Heart left ventricle (tissue), 16 donors: ENCODE measurements at regions of chr6 and their contacts with region 1.

Region 1: DNA sequence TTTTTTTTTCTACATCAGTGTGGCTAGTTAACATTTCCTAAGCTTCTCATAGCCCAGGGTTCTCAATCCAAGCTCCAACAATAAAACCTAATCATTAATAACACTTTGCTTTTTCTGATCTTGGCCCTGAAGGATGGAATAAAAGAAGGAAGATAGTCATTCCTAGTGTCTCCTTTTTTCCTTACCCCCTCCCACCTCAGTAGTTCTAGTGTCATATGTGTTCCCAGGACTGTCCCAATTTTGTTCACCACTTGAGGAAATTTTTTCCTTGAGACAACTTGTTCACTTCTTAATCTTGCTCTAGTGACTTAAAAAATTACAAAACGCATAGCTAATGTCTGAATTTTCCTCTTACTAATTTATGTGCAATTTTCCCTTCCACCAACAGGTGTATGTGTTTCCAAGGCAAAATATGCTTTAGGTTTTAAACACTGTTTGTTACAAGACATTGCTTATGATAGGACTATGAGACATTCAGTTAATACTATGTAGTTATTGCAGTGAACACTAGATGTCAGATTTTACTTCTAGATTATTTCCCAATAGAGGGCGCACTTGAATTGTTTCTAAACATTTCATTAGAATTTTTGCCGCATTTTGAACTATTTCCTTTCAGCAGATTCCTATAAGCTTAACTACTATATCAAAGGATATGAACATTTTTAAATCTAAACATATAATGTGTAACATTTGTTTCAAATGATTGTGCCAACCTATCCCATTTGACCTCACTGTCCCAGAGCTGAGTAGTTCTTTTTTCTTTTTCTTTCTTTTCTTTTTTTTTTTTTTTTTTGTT is 18.5 kb upstream of the C6orf141 start:
- DNase-seq: no peak
- ATAC-seq: peak in 2 of 4 donors; percentile 62 to 67
- H3K4me3 ChIP-seq: peak overlapping the region in 5 of 12 donors; percentile 13 to 29 (median 26)
- H3K27ac ChIP-seq: no peak overlapping the region
- H3K4me1 ChIP-seq: no peaks in the 10 kb centered on the region
- H3K27me3 ChIP-seq: peaks cover 0 to 3% (median 0%) of the 10 kb centered on the region in 9 donors
- CTCF ChIP-seq: peak; percentile 56 to 90 (median 76)
- POLR2A ChIP-seq: no peak

Region 2: DNA sequence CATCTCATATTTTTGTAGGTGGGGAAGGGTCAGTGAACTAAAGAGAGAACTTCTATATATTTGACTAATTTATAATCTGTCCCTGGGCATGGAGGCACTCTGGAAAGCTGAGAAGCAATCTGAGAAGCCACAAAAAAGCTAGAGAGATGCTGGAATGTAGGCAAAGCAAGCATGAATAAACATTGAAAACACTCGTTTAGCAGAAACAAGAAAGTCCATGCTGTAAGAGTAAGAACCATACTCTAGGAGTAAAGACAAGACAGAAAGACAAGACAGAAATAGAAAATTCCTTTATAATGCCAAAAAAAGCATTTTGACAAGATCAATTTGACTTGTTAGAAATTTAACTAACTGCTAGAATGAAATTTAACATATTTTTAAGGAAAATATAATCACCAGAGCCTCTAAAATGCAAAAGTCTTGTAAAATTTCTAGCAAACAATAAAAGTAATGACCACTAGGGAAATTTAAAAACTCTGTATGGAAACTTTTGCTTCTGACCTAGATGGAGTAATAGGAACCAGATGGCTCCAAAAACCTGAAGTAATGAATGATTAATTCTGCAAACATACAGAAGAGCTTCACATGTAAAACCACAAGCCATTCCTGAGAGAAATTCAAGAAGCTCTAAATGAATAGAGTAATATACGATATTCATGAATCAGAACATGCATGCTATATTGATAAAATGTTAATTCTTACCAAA is 795.3 kb before region 1 on chr6:
- intact Hi-C with region 1: no loop called
- DNase-seq: no peak
- ATAC-seq: no peak
- H3K4me3 ChIP-seq: no peak overlapping the region
- H3K27ac ChIP-seq: no peak overlapping the region
- H3K4me1 ChIP-seq: no peaks in the 10 kb centered on the region
- H3K27me3 ChIP-seq: no peaks in the 10 kb centered on the region
- CTCF ChIP-seq: no peak
- POLR2A ChIP-seq: no peak

Region 3: GRCh38 chr6:48835421-48835958 is 696.5 kb before region 1 on chr6:
- intact Hi-C with region 1: no loop called
- DNase-seq: no peak
- ATAC-seq: no peak
- H3K4me3 ChIP-seq: no peak overlapping the region
- H3K27ac ChIP-seq: no peak overlapping the region
- H3K4me1 ChIP-seq: no peaks in the 10 kb centered on the region
- H3K27me3 ChIP-seq: no peaks in the 10 kb centered on the region
- CTCF ChIP-seq: no peak
- POLR2A ChIP-seq: no peak

Region 4: DNA sequence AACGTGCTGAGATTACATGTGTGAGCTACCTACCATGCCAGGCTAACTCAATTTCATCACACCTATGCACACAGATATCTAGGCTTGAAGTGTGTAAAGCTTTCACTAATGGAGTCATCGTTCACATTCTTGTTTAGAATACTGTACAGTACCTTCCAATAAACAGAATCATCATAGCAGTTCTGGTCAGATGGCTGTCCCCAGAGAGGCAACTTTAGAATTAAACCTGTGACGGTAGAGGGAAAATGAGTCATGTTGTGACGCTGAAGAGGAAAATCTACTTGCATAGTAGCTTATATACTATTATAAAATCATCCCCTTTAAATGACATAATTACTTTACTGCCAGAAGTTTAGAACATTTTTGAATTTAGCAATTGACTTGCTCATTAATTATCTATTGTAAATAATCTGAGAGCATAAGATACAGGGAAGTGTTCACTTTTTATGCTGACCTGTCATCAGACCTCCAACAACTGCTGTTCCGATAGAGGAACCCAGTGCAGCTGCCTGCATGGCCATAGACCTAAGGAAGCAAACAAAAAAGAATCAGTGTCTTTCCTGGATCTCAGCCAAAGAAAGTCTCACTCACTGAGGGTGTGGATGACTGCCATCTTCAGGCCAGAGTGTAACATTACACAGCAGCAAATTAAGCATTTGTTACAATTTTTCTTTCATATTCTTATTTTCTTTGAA is 74.9 kb after region 1 on chr6:
- intact Hi-C with region 1: loop called in 9 of 10 experiments (anchors 2 to 10 kb)
- DNase-seq: peak in 1 of 5 donors; percentile 33
- ATAC-seq: peak in 3 of 4 donors; percentile 55 to 58 (median 55)
- H3K4me3 ChIP-seq: no peak overlapping the region
- H3K27ac ChIP-seq: no peak overlapping the region
- H3K4me1 ChIP-seq: no peaks in the 10 kb centered on the region
- H3K27me3 ChIP-seq: peaks cover 0 to 9% (median 0%) of the 10 kb centered on the region in 9 donors
- CTCF ChIP-seq: peak; percentile 65 to 87 (median 78)
- POLR2A ChIP-seq: no peak

Region 5: GRCh38 chr6:49856282-49856681 is 324.3 kb after region 1 on chr6:
- intact Hi-C with region 1: loop called in 2 of 10 experiments (anchors 5 to 10 kb)
- DNase-seq: no peak
- ATAC-seq: no peak
- H3K4me3 ChIP-seq: no peak overlapping the region
- H3K27ac ChIP-seq: no peak overlapping the region
- H3K4me1 ChIP-seq: no peaks in the 10 kb centered on the region
- H3K27me3 ChIP-seq: no peaks in the 10 kb centered on the region
- CTCF ChIP-seq: no peak
- POLR2A ChIP-seq: no peak